ENCODE measurements at regions of chr6 and their contacts with region 1.

Region 1: DNA sequence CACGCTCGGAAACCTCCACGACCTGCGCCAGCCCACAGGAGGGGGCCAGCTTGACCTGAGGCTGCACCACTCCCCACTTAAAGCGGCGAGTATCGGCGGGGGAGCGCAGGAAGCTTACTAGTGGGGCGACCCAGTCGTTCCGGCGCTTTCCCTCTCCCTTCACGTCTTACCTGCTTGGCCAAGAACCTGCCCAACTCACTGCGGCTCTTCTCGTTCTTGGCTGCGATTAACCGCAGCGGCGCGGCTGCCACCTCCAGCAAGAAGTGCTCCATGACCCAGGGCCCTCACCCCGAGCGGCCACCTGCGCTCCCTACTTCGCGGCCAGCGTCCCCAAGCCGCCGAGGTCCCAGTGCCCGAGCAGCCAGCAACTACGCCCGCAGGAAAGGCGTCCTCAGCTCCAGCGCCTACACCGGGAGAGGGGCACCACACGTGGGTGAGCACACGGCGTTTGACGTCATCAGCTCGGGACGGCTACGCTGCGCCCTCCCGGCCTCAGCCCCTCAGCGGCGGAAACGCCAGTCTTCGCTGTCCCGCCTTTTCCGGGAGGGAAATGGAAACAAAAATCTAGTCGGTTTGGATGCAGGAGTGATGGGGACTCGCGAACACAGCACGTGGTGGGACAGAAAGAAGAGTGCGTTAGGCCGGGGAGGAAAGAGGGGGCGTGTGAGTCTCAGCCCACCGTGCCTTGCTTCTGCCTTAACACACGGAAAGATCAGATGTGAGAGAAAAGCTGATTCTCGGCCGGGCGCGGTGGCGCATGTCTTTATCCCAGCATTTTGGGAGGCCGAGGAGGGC is at the start of gene MDN1:
- DNase-seq: peak; percentile 87 to 91 (median 89)
- H3K4me3 ChIP-seq: peak within 1 kb of the TSS; percentile 97
- H3K4me3 Mint-ChIP-seq: peak within 1 kb of the TSS; percentile 92 to 100 (median 96)
- H3K27ac ChIP-seq: peak within 1 kb of the TSS; percentile 62
- H3K27ac Mint-ChIP-seq: peak within 1 kb of the TSS; percentile 91 to 100 (median 96)
- H3K4me1 ChIP-seq: peaks cover 34% of the 10 kb centered on the region
- H3K4me1 Mint-ChIP-seq: peaks cover 21 to 44% (median 31%) of the 10 kb centered on the region in 4 donors
- H3K27me3 ChIP-seq: no peaks in the 10 kb centered on the region
- H3K27me3 Mint-ChIP-seq: no peaks in the 10 kb centered on the region
- total RNA-seq, gene MDN1: 62.0 to 72.2 TPM

Region 2: DNA sequence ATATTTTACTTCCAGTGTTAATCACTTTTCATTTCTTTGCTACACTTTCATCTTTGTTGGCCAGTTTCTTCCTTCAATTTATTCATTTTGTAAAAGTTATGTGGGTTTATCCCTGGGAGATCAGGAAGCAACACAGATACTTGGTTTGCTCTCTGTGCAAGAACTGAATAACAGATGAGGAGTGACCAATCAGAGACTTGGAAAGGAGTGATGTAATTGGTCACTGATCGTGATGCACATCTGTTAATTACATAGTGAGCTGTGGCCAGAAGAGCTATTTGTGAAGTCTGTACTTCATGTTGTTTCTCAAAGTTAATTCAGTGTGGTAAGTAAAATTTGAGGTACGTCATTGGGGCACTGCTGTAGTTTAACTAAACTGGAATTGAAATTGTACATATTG is 365.2 kb before region 1 on chr6:
- CTCF ChIA-PET with region 1: no interaction called
- POLR2A ChIA-PET with region 1: no interaction called
- intact Hi-C with region 1: no loop called
- DNase-seq: no peak
- H3K4me3 ChIP-seq: no peak overlapping the region
- H3K4me3 Mint-ChIP-seq: no peak overlapping the region
- H3K27ac ChIP-seq: no peak overlapping the region
- H3K27ac Mint-ChIP-seq: no peak overlapping the region
- H3K4me1 ChIP-seq: no peaks in the 10 kb centered on the region
- H3K4me1 Mint-ChIP-seq: no peaks in the 10 kb centered on the region
- H3K27me3 ChIP-seq: no peaks in the 10 kb centered on the region
- H3K27me3 Mint-ChIP-seq: no peaks in the 10 kb centered on the region

Region 3: GRCh38 chr6:89638320-89639195 is 181.0 kb before region 1 on chr6 and contains the start of gene LYRM2:
- CTCF ChIA-PET with region 1: no interaction called
- POLR2A ChIA-PET with region 1: interaction called, 5 read pairs
- intact Hi-C with region 1: loop called (anchors 2 kb)
- DNase-seq: peak; percentile 90 to 94 (median 92)
- H3K4me3 ChIP-seq: peak within 1 kb of the TSS; percentile 97 to 99
- H3K4me3 Mint-ChIP-seq: peak within 1 kb of the TSS; percentile 95 to 98 (median 96)
- H3K27ac ChIP-seq: peak within 1 kb of the TSS; percentile 95
- H3K27ac Mint-ChIP-seq: peak within 1 kb of the TSS; percentile 98 to 100 (median 99)
- H3K4me1 ChIP-seq: peaks cover 18% of the 10 kb centered on the region
- H3K4me1 Mint-ChIP-seq: peaks cover 20 to 45% (median 29%) of the 10 kb centered on the region in 4 donors
- H3K27me3 ChIP-seq: no peaks in the 10 kb centered on the region
- H3K27me3 Mint-ChIP-seq: no peaks in the 10 kb centered on the region
- total RNA-seq, gene LYRM2: 31.8 to 36.7 TPM

Region 4: DNA sequence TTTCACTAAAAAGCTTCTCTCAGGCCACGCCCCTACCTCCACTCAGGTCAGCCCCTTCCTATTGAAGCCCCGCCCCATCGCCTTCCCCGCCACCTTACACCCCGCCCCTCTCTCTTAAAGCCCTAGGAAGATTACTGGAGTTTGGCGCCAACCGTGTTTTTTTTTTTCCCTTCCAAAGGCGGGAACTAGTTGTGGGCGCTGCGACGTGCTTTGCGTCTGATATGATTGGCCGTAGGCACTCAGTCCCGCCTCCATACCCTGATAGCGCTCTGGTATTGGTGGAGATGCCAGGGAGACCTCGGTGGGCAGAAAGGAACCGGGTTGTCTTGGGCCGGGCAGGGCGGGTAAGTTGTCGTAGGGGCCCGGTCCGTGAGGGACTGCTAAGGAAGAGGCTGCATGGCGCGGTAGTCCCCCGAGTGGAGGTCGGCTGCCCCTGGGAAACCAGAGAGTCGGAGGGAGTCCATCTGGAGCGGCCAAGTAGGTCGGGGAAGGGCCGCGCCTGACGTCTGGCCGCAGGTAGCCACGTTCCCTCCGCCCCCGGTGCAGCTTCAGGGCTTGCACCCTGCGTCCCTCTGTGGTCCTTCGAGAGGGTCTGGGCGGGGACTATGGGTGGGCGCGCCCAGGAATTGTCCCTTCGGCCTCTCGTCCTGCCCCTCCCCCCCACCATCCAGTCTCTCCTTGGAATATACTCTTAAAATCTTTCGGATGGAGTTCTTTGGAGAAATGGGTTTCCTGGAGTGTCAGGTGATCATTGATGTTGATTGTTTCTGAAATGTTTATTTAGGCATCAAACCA is 10.3 kb after region 1 on chr6 and contains the start of gene CASP8AP2:
- CTCF ChIA-PET with region 1: interaction called, 15 read pairs
- POLR2A ChIA-PET with region 1: interaction called, 147 read pairs
- intact Hi-C with region 1: loop called (anchors 1 kb)
- DNase-seq: peak; percentile 93 to 98 (median 98)
- H3K4me3 ChIP-seq: peak within 1 kb of the TSS; percentile 85 to 86
- H3K4me3 Mint-ChIP-seq: peak within 1 kb of the TSS; percentile 98 to 100 (median 99)
- H3K27ac ChIP-seq: peak within 1 kb of the TSS; percentile 74
- H3K27ac Mint-ChIP-seq: peak within 1 kb of the TSS; percentile 79 to 99 (median 97)
- H3K4me1 ChIP-seq: peaks cover 32% of the 10 kb centered on the region
- H3K4me1 Mint-ChIP-seq: peaks cover 17 to 52% (median 37%) of the 10 kb centered on the region in 4 donors
- H3K27me3 ChIP-seq: no peaks in the 10 kb centered on the region
- H3K27me3 Mint-ChIP-seq: no peaks in the 10 kb centered on the region
- total RNA-seq, gene CASP8AP2: 59.4 to 61.7 TPM

Region 5: GRCh38 chr6:89840538-89840937 is 21.0 kb after region 1 on chr6:
- CTCF ChIA-PET with region 1: interaction called, 4 read pairs
- POLR2A ChIA-PET with region 1: interaction called, 43 read pairs
- intact Hi-C with region 1: loop called (anchors 1 kb)
- DNase-seq: no peak
- H3K4me3 ChIP-seq: no peak overlapping the region
- H3K4me3 Mint-ChIP-seq: peak overlapping the region in 1 of 8 donors; percentile 11
- H3K27ac ChIP-seq: no peak overlapping the region
- H3K27ac Mint-ChIP-seq: peak overlapping the region in 4 of 7 donors; percentile 8 to 69 (median 52)
- H3K4me1 ChIP-seq: peaks cover 57% of the 10 kb centered on the region
- H3K4me1 Mint-ChIP-seq: peaks cover 34 to 64% (median 51%) of the 10 kb centered on the region in 4 donors
- H3K27me3 ChIP-seq: no peaks in the 10 kb centered on the region
- H3K27me3 Mint-ChIP-seq: no peaks in the 10 kb centered on the region

Region 6: GRCh38 chr6:90586836-90587638 is 767.5 kb after region 1 on chr6 and contains the start of gene MAP3K7:
- CTCF ChIA-PET with region 1: interaction called, 3 read pairs
- POLR2A ChIA-PET with region 1: interaction called, 5 read pairs
- intact Hi-C with region 1: loop called (anchors 2 kb)
- DNase-seq: peak; percentile 93 to 94 (median 94)
- H3K4me3 ChIP-seq: peak within 1 kb of the TSS; percentile 80 to 82
- H3K4me3 Mint-ChIP-seq: peak within 1 kb of the TSS; percentile 95 to 98 (median 97)
- H3K27ac ChIP-seq: peak within 1 kb of the TSS; percentile 97
- H3K27ac Mint-ChIP-seq: peak within 1 kb of the TSS; percentile 97 to 100 (median 99)
- H3K4me1 ChIP-seq: peaks cover 38% of the 10 kb centered on the region
- H3K4me1 Mint-ChIP-seq: peaks cover 29 to 43% (median 36%) of the 10 kb centered on the region in 4 donors
- H3K27me3 ChIP-seq: no peaks in the 10 kb centered on the region
- H3K27me3 Mint-ChIP-seq: peaks cover 2 to 12% of the 10 kb centered on the region in 2 donors
- total RNA-seq, gene MAP3K7: 33.6 to 34.1 TPM

Measured in CD4-positive, alpha-beta memory T cell (primary cell).